IMR-90 (cell line): ENCODE measurements at regions of chr2 and their contacts with region 1.

Region 1: DNA sequence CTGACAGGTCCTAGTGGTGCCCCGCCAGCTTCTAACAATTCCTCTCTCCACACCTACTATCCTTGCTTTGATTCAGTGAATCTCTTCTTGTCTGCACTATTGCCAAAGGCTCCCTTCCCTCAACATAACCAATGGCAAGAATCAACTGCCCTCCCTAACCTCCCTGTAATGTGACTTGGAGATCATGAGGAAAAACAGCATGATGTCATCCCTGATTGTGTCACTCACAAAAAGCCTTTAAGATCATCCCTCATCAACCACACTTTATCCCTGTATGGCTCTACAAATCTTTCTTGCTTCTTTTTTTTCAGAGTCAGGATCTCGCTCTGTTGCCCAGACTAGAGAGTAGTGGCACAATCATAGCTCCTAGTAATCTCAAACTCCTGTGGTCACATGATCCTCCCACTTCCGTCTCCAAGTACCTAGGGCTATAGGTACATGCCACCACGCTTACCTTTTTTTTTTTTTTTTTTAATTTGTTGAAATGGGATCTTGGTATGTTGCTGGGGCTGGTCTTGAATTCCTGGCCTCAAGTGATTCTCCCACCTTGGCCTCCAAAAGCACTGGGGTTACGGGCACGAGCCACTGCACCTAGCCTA is 19.7 kb downstream of the SAP130 start:
- DNase-seq: no peak
- ATAC-seq: no peak
- H3K4me3 ChIP-seq: no peak overlapping the region
- H3K27ac ChIP-seq: no peak overlapping the region
- H3K4me1 ChIP-seq: no peaks in the 10 kb centered on the region
- H3K27me3 ChIP-seq: no peaks in the 10 kb centered on the region
- CTCF ChIP-seq: no peak
- POLR2A ChIP-seq: no peak
- RAD21 ChIP-seq: no peak

Region 2: DNA sequence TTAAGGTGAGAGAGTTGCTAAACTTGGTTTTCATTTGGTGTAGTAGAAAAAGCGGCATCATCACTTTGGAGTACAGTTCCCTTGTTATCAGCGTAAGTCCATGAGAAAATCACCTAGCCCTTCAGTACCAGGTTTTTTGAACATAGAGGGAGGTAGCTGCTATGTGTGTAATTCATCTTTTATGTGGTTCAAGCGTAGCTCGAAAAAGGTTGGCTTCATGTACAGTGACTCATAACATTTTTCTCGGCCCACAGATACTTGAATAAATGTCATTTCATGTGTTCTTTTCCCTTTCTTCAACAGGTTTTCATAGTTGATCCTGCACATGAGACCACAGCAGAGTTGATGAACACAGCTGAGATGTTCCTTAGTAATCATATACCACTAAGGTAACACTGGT is 126.4 kb after region 1 on chr2:
- CTCF ChIA-PET with region 1: no interaction called
- POLR2A ChIA-PET with region 1: no interaction called
- dilution Hi-C with region 1: no loop called
- in situ Hi-C with region 1: no loop called
- intact Hi-C with region 1: loop called (anchors 10 kb)
- DNase-seq: peak; percentile 34
- ATAC-seq: no peak
- H3K4me3 ChIP-seq: no peak overlapping the region
- H3K27ac ChIP-seq: no peak overlapping the region
- H3K4me1 ChIP-seq: no peaks in the 10 kb centered on the region
- H3K27me3 ChIP-seq: no peaks in the 10 kb centered on the region
- CTCF ChIP-seq: no peak
- POLR2A ChIP-seq: no peak
- RAD21 ChIP-seq: no peak

Region 3: DNA sequence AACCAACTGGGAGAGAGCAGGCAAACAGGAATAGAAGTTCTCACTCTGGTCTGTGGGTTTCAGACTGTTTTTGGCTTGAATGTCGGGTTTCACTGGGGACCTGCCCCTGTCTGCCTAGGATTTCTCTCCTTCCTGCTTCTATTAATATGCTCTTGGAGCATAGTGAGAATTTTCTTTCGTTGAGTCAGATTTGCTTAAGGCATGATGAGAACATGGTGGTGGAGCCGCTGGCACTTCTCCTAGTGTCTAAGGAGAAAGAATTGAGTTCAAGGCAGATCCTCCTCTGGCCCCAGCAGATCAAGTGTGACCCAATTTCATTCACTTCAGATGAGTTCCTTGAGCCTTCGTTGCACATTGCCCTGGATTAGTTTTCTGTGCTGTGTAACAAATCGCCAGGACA is 414.4 kb after region 1 on chr2:
- CTCF ChIA-PET with region 1: no interaction called
- POLR2A ChIA-PET with region 1: no interaction called
- dilution Hi-C with region 1: no loop called
- in situ Hi-C with region 1: no loop called
- intact Hi-C with region 1: no loop called
- DNase-seq: peak; percentile 88
- ATAC-seq: peak; percentile 69
- H3K4me3 ChIP-seq: no peak overlapping the region
- H3K27ac ChIP-seq: no peak overlapping the region
- H3K4me1 ChIP-seq: peaks cover 10% of the 10 kb centered on the region
- H3K27me3 ChIP-seq: no peaks in the 10 kb centered on the region
- CTCF ChIP-seq: no peak
- POLR2A ChIP-seq: no peak
- RAD21 ChIP-seq: no peak